BJ (cell line): ENCODE measurements at regions of chr1 and their contacts with region 1.

Region 1: GRCh38 chr1:119310301-119310700 is 58.3 kb upstream of the HAO2 start:
- DNase-seq: no peak
- H3K4me3 ChIP-seq: no peak overlapping the region
- H3K27me3 ChIP-seq: peaks cover 3% of the 10 kb centered on the region
- CTCF ChIP-seq: no peak

Region 2: GRCh38 chr1:119101563-119101962 is 208.7 kb before region 1 on chr1:
- CTCF ChIA-PET with region 1: no interaction called
- POLR2A ChIA-PET with region 1: no interaction called
- DNase-seq: peak; percentile 26
- H3K4me3 ChIP-seq: no peak overlapping the region
- H3K27me3 ChIP-seq: no peaks in the 10 kb centered on the region
- CTCF ChIP-seq: no peak

Region 3: DNA sequence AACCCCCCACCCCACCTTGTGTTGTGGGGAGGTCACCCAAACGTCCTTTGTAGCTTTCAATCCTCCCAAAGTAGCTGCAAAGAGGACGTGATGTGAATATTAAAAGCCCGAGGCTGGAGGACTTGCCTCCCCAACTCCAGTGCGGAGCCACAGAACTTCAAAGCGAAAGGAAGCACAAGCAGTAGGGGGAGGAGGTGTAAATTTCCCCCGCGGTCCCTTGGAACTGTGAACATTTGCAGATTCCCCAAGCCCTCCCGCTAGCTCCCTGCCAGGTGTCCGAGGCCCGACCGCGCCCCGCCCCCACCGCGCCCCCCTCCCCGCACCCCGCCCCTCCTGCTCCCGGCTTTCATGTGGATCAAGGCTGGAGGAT is 16.8 kb after region 1 on chr1:
- CTCF ChIA-PET with region 1: no interaction called
- POLR2A ChIA-PET with region 1: interaction called, 12 read pairs
- DNase-seq: no peak
- H3K4me3 ChIP-seq: no peak overlapping the region
- H3K27me3 ChIP-seq: peaks cover 1% of the 10 kb centered on the region
- CTCF ChIP-seq: no peak

Region 4: DNA sequence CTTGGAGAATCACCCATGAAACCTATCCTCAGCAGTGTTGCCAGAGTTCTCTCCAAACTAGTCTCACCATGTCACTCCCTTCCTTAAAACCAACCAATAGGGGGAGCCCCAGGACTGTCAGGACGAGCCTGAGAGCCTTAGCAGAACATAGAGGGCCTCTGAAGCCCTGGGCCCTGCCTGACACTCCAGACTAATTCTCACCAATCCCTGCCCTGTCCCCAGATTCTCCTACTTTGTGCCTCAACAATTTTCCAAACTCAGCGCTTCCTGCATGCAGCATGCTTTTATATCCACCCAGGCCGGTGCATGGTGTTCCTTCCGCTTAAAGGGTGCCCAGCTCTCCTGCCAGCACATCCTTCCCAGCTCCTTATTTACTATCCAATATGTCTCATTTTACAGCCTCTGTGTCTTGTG is 239.4 kb after region 1 on chr1:
- CTCF ChIA-PET with region 1: no interaction called
- POLR2A ChIA-PET with region 1: no interaction called
- DNase-seq: no peak
- H3K4me3 ChIP-seq: no peak overlapping the region
- H3K27me3 ChIP-seq: peaks cover 3% of the 10 kb centered on the region
- CTCF ChIP-seq: peak; percentile 68